Heart right ventricle (tissue), 16 donors: ENCODE measurements at regions of chr18 and their contacts with region 1.

Region 1: GRCh38 chr18:46424898-46425297 is 232.1 kb downstream of the LOXHD1 start:
- DNase-seq: no peak
- ATAC-seq: peak in 1 of 8 donors; percentile 14
- H3K4me3 ChIP-seq: no peak overlapping the region
- H3K27ac ChIP-seq: no peak overlapping the region
- H3K4me1 ChIP-seq: peaks cover 0 to 18% (median 1%) of the 10 kb centered on the region in 9 donors
- H3K27me3 ChIP-seq: no peaks in the 10 kb centered on the region
- CTCF ChIP-seq: no peak

Region 2: DNA sequence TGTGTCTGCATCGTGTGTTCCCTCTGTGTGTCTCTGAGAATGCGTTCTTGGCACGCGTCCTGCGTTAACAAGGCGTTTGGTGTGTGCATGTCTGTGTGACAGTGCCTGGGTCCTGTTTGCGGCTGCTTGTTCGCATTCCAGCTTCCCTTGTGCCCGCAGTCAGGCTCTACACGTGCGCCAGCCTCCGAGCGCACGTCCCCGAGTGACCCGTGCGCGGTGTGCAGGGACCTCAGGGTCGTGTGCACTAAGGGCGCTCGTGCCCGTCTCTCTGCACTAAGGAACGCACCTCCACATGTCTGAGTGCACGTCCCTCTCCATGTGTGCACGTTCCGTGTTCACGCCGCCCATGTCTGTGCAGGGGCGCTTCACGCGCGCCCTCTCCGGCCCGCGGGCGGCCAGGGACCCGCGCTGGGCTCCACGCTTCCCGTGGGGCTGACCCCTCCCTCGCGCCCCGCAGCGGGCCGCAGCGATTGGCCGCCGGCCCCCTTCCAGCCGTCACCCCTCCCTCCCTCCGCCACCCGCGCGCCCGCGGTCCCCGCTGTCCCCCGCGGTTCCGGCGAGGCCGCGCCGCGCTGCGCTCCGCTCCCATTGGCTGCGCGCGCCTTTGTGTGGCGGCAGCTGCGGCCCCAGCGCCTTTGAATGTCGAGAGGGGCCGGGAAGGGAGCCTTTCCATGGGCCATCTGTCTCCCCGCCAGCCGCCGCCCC is 91.3 kb before region 1 on chr18:
- intact Hi-C with region 1: loop called in 1 of 10 experiments (anchors 10 kb)
- DNase-seq: peak; percentile 42 to 64
- ATAC-seq: peak; percentile 66 to 84 (median 74)
- H3K4me3 ChIP-seq: peak overlapping the region; percentile 38 to 85 (median 66)
- H3K27ac ChIP-seq: peak overlapping the region in 6 of 10 donors; percentile 32 to 77 (median 65)
- H3K4me1 ChIP-seq: peaks cover 10 to 46% (median 33%) of the 10 kb centered on the region in 9 donors
- H3K27me3 ChIP-seq: peaks cover 0 to 64% (median 0%) of the 10 kb centered on the region in 7 donors
- CTCF ChIP-seq: peak in 1 of 9 donors; percentile 4

Region 3: DNA sequence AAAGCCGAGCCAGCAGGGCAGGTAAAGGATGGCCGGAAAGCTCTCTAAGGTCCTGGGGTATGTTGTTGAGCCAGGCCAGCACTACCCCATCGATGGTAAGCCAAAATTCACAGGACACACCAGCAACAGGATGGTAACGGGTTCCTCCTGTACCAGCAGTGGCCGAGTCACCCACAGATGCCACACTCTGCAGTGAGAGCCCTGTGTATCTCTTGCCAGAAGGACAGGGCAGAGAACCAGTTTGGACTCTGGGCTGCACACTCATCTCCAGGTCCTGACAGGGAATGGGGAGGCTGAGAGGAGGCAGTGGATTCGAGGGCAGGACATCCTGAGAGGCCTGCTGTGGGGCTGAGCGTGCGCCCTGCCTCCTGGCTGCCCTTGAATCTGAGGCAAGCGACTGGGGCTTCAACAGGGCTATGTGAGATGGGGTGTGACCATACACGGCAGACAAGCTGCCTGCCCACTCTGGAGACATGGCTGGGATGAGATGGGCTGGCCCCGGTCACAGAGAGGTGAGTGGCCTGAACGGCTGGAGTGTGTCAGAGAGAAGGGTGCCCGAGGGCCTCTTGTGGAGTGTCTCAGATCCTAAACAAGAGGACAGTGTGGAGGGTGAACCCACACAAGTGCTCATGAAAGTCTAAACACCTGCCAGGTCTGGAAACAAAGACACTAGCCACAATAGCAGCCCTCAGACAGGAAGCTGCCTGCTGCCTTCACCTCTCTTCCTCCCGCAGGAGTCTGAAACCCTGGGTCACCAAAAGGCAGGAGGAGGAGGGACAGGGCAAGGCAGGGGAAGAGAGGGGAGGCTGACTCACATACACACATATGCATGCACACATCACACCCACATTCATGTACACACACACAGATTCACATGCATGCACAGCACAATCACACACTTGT is 49.8 kb after region 1 on chr18:
- intact Hi-C with region 1: loop called in 2 of 10 experiments (anchors 5 to 10 kb)
- DNase-seq: no peak
- ATAC-seq: peak in 6 of 8 donors; percentile 9 to 49 (median 33)
- H3K4me3 ChIP-seq: no peak overlapping the region
- H3K27ac ChIP-seq: no peak overlapping the region
- H3K4me1 ChIP-seq: peaks cover 0 to 11% (median 0%) of the 10 kb centered on the region in 9 donors
- H3K27me3 ChIP-seq: no peaks in the 10 kb centered on the region
- CTCF ChIP-seq: no peak

Region 4: DNA sequence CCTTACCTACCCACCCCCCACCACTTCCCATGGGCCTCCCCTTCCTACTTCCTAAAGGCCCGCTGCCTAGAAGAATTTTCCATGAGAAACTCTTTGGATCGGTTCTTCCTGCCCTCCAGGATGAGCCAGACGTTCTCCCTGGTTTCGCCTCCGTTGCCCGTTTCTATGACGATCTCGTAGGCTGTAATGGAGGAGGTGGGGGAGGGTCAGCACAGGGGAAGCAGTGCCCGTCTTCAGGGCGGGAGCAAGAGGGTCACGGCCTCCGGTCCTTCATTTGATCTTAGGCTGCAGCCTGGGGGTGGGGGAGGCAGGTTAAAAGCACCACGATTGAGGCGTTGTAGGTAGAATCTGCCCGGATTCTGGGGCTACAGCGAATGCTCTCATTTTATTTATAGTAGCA is 60.1 kb after region 1 on chr18:
- intact Hi-C with region 1: no loop called
- DNase-seq: no peak
- ATAC-seq: no peak
- H3K4me3 ChIP-seq: peak overlapping the region in 2 of 10 donors; percentile 11 to 13
- H3K27ac ChIP-seq: no peak overlapping the region
- H3K4me1 ChIP-seq: peaks cover 0 to 21% (median 6%) of the 10 kb centered on the region in 9 donors
- H3K27me3 ChIP-seq: no peaks in the 10 kb centered on the region
- CTCF ChIP-seq: no peak